Activated CD4-positive, alpha-beta T cell treated with anti-CD3 and anti-CD28 coated beads for 36 hours (primary cell): ENCODE measurements at regions of chr1 and their contacts with region 1.

Region 1: DNA sequence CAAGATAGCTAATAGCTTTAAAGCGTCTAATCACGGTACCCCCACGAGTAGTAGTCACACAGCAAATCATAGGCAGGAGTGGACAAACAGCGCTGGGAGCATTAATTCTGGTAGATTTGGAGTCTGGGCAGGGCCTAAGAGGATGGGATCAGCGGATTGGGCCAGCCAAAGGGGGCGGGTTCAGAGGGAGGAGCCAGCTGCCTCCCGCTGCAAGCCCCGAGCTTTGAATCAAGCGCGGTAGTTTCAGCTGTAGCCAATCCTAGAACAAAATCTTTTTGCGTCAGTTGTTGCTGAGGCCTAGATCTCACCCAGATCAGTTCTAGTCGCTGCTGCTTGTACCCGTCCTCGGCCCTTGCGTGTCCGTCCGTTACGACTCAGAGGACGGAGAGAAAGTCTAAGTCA is 576 bp upstream of the NASP start:
- DNase-seq: peak; percentile 97
- ATAC-seq: peak; percentile 84
- H3K4me3 Mint-ChIP-seq: peak overlapping the region; percentile 91
- H3K27ac Mint-ChIP-seq: peak overlapping the region; percentile 100
- H3K4me1 Mint-ChIP-seq: peaks cover 20% of the 10 kb centered on the region
- H3K27me3 Mint-ChIP-seq: no peaks in the 10 kb centered on the region

Region 2: GRCh38 chr1:44674113-44675000 is 908.9 kb before region 1 on chr1 and contains the starts of genes ARMH1 and TMEM53:
- CTCF ChIA-PET with region 1: no interaction called
- POLR2A ChIA-PET with region 1: no interaction called
- intact Hi-C with region 1: loop called in 1 of 2 experiments (anchors 1 kb)
- DNase-seq: peak; percentile 99
- ATAC-seq: peak; percentile 97
- H3K4me3 Mint-ChIP-seq: peak within 1 kb of the TSS; percentile 78
- H3K27ac Mint-ChIP-seq: peak within 1 kb of the TSS; percentile 84
- H3K4me1 Mint-ChIP-seq: peaks cover 24% of the 10 kb centered on the region
- H3K27me3 Mint-ChIP-seq: no peaks in the 10 kb centered on the region
- total RNA-seq, gene ARMH1: 67.3 to 75.1 TPM
- total RNA-seq, gene TMEM53: 4.3 to 5.5 TPM

Region 3: DNA sequence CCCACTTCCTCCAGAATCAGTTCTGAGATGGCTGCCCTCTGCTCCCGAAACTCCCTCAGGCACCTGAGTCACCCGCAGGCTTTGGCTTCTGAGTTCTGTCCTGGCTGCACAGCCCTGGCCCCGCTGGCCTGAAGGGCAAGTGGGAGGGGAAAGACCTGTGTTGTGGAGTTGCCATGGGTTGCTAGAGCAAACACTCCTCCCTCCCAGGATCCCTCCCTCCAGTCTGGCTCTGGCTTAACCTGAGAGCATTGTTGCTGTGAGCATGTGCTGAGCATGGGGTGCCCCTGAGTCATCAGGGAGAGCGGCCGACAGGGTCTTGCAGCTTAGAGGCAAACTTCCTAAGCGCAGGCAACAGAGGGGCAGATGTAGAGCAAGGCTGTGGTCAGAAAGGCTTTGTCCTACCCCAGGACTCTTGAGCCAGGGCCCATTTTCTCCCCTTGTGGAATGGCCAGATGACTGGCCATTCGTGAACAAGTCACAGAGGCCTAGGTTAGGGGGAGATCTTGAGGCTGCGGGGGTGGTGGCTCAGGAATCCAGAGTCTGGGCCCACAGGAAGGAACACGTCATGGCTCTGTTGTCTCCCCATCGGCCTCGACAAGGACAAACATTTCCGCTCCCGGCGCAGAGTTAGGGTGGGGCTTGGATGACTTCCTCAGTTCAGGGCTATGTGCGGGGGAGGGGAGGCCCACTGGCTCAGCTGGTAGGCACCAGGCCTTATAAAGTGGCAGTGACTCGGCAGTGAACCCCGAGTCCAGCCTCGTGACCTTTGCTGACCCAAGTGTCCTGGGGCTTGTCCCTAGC is 775.8 kb before region 1 on chr1 and contains the start of gene DYNLT4:
- CTCF ChIA-PET with region 1: no interaction called
- POLR2A ChIA-PET with region 1: interaction called, 4 read pairs
- intact Hi-C with region 1: loop called in 1 of 2 experiments (anchors 2 kb)
- DNase-seq: peak; percentile 94
- ATAC-seq: peak; percentile 57
- H3K4me3 Mint-ChIP-seq: peak within 1 kb of the TSS; percentile 87
- H3K27ac Mint-ChIP-seq: peak within 1 kb of the TSS; percentile 99
- H3K4me1 Mint-ChIP-seq: peaks cover 92% of the 10 kb centered on the region
- H3K27me3 Mint-ChIP-seq: no peaks in the 10 kb centered on the region
- total RNA-seq, gene DYNLT4: 0.32 TPM in 1 of 2 experiments, not detected in the other

Region 4: DNA sequence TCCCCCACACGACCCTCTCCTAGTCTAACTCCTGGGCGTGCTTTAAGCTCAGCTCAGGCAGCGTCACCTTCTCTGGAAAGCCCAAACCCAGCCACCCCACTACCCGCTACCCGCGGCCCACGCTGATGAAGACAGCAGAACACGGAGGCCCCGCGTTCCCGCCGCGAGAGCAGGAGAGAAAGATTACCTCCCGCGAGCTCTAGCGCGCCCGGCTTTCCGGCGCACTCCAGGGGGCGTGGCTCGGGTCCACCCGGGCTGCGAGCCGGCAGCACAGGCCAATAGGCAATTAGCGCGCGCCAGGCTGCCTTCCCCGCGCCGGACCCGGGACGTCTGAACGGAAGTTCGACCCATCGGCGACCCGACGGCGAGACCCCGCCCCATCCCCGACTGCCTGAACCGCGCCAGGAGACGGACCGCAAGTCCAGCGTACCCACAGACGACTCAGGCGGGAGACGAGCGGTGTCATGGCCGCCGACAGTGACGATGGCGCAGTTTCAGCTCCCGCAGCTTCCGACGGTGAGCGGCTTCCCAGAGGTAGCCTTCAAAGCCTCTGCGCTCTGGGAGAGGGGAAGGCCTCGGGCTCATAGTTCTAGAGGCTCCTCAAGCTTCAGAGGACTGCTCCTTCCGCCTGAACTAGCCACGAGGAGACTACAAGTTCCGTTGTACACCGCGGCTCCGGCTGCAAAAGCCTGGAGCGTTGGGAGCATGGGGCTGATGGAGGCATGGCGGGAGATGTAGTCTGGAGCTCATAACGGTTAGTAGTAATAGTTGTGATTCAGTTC is 243.3 kb before region 1 on chr1 and contains the starts of genes MUTYH and TOE1:
- CTCF ChIA-PET with region 1: interaction called, 4 read pairs
- POLR2A ChIA-PET with region 1: interaction called, 36 read pairs
- intact Hi-C with region 1: loop called in 1 of 2 experiments (anchors 1 kb)
- DNase-seq: peak; percentile 98
- ATAC-seq: peak; percentile 86
- H3K4me3 Mint-ChIP-seq: peak within 1 kb of the TSS; percentile 100
- H3K27ac Mint-ChIP-seq: peak within 1 kb of the TSS; percentile 100
- H3K4me1 Mint-ChIP-seq: peaks cover 27% of the 10 kb centered on the region
- H3K27me3 Mint-ChIP-seq: no peaks in the 10 kb centered on the region
- total RNA-seq, gene MUTYH: 48.6 to 53.7 TPM
- total RNA-seq, gene TOE1: 29.8 to 42.3 TPM

Region 5: GRCh38 chr1:45521398-45522323 is 61.6 kb before region 1 on chr1 and contains the start of gene PRDX1:
- CTCF ChIA-PET with region 1: no interaction called
- POLR2A ChIA-PET with region 1: interaction called, 27 read pairs
- intact Hi-C with region 1: loop called (anchors 1 kb)
- DNase-seq: peak; percentile 98
- ATAC-seq: peak; percentile 89
- H3K4me3 Mint-ChIP-seq: peak within 1 kb of the TSS; percentile 96
- H3K27ac Mint-ChIP-seq: peak within 1 kb of the TSS; percentile 94
- H3K4me1 Mint-ChIP-seq: peaks cover 47% of the 10 kb centered on the region
- H3K27me3 Mint-ChIP-seq: peaks cover 4% of the 10 kb centered on the region
- total RNA-seq, gene PRDX1: 473 to 580 TPM

Region 6: DNA sequence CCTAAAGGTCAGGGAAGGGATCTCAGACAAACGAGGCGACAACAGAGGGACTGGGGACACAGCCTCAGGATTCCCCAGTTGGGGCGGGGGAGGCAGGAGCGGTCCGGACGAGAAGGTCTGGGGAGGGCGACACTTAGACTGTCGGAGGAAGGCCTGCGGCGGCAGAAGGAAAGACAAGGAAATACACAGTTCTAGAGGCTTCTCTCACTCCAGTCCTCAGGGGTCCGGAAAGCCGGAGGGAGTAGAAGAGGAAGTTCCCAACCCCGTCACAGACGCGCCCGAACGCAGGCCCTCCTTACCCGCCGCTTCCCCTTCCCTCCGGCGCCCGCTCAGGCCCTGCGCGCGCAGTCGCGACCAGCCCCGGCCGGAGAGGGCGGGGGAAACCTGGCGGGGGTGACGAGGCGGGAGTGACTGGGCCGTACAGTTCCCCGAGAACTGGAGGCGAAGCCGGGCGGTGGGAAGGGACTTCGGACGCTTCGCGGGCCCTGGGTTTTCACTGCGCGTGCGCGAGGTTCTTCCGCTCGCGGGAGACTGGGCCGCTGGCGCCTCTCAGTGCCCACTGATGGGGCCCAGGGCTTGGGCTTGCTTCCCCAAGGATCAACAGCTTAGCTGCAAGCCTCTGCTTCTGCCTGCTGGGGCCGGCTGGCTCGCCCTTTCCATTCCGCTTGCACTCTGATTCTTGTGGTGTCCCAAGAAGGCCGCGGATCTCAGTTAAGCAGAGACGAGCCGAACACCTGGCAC is 167.2 kb after region 1 on chr1 and contains the start of gene IPP:
- CTCF ChIA-PET with region 1: no interaction called
- POLR2A ChIA-PET with region 1: no interaction called
- intact Hi-C with region 1: loop called (anchors 1 kb)
- DNase-seq: peak; percentile 97
- ATAC-seq: peak; percentile 99
- H3K4me3 Mint-ChIP-seq: peak within 1 kb of the TSS; percentile 93
- H3K27ac Mint-ChIP-seq: peak within 1 kb of the TSS; percentile 95
- H3K4me1 Mint-ChIP-seq: peaks cover 27% of the 10 kb centered on the region
- H3K27me3 Mint-ChIP-seq: no peaks in the 10 kb centered on the region
- total RNA-seq, gene IPP: 11.6 to 21.8 TPM

Region 7: DNA sequence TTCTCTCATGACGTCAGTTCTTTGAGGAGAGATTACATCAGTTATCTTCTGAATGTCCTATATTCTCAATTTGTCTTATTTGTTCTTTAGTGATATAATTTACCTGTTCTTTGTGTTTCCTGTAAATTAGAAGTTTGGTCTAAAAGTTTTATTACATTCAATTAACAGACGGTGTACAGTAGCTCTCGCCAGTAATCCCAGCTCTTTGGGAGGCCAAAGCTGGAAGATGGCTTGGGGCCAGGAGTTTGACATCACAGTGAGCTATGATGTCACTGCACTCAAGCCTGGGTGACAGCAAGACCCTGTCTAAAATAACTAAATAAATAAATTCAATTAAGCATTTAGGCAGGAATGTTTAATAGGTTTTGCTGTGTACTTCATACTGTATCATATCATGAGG is 192.5 kb after region 1 on chr1:
- CTCF ChIA-PET with region 1: no interaction called
- POLR2A ChIA-PET with region 1: no interaction called
- intact Hi-C with region 1: no loop called
- DNase-seq: no peak
- ATAC-seq: no peak
- H3K4me3 Mint-ChIP-seq: no peak overlapping the region
- H3K27ac Mint-ChIP-seq: no peak overlapping the region
- H3K4me1 Mint-ChIP-seq: no peaks in the 10 kb centered on the region
- H3K27me3 Mint-ChIP-seq: no peaks in the 10 kb centered on the region

Region 8: GRCh38 chr1:45870500-45870899 is 287.2 kb after region 1 on chr1:
- CTCF ChIA-PET with region 1: no interaction called
- POLR2A ChIA-PET with region 1: no interaction called
- intact Hi-C with region 1: no loop called
- DNase-seq: no peak
- ATAC-seq: no peak
- H3K4me3 Mint-ChIP-seq: no peak overlapping the region
- H3K27ac Mint-ChIP-seq: no peak overlapping the region
- H3K4me1 Mint-ChIP-seq: peaks cover 10% of the 10 kb centered on the region
- H3K27me3 Mint-ChIP-seq: no peaks in the 10 kb centered on the region

Region 9: DNA sequence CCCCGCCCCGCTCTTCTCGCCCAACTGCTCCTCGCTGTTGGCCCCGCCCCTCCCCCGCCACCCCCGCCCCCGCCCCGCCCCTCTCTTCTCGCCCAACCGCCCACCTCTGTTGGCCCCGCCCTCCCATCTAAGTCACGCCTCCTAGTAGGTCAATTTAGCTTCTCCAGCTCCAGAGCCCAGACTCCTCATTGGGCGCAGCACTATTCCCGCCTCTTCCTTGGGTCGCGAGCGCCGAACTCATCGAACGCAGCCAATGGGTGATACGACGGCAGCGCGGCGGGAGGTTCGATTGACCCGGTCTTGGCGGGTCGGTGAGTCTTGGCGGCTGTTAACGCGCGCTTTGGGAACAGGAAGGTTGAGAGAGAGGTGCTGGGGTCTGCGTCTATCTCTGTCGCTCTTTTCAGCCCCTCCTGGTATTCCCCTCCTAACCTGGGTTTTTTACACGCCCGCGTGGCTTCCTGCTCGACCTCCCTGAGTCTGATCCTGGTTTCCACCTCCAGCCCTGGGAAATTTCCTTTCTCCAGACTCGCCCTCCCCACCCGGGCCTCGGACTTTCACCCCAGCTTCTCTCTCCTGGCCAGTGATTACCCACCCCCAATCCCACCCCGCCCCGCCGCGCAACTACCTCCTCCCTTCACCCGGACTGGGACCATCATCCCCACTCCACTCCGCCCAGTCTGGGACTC is 664.3 kb after region 1 on chr1 and contains the start of gene RAD54L:
- CTCF ChIA-PET with region 1: no interaction called
- POLR2A ChIA-PET with region 1: no interaction called
- intact Hi-C with region 1: loop called in 1 of 2 experiments (anchors 1 kb)
- DNase-seq: peak; percentile 99
- ATAC-seq: peak; percentile 94
- H3K4me3 Mint-ChIP-seq: peak within 1 kb of the TSS; percentile 83
- H3K27ac Mint-ChIP-seq: peak within 1 kb of the TSS; percentile 92
- H3K4me1 Mint-ChIP-seq: peaks cover 20% of the 10 kb centered on the region
- H3K27me3 Mint-ChIP-seq: no peaks in the 10 kb centered on the region
- total RNA-seq, gene RAD54L: 64.2 to 73.4 TPM